ENCODE measurements at regions of chr6 and their contacts with region 1.

Region 1: DNA sequence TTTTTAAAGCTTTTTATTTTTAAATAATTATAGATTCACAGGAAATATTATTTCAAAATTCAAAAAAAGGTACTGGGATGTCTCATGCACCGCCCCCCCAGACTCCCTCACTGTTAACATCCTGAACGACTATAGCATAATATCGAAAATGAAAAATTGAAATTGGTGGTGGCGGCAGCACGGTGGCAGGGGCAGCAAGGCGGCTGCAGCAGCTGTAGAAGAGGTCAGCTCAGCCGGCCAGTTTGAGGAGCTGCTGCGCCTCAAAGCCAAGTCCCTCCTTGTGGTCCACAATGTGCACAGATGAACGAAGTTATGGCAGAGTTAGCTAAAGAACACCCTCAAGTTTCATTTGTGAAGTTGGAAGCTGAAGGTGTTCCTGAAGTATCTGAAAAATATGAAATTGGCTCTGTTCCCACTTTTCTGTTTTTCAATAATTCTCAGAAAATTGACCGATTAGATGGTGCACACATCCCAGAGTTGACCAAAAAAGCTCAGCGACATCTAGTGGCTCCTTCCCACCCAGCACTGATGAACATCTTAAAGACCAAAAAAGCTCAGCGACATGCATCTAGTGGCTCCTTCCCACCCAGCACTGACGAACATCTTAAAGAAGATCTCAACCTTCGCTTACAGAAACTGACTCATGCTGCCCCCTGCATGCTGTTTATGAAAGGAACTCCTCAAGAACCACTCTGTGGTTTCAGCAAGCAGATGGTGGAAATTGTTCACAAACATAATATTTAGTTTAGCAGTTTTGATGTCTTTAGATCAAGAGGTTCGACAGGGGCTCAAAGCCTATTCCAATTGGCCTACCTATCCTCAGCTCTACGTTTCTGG is 100.8 kb downstream of the FAM217A start:
- DNase-seq: peak; percentile 6 to 84 (median 31)
- ATAC-seq: peak; percentile 100
- H3K4me3 ChIP-seq: no peak overlapping the region
- H3K4me3 Mint-ChIP-seq: no peak overlapping the region
- H3K27ac ChIP-seq: no peak overlapping the region
- H3K27ac Mint-ChIP-seq: no peak overlapping the region
- H3K4me1 ChIP-seq: peaks cover 8% of the 10 kb centered on the region
- H3K4me1 Mint-ChIP-seq: peaks cover 17% of the 10 kb centered on the region
- H3K27me3 ChIP-seq: no peaks in the 10 kb centered on the region
- H3K27me3 Mint-ChIP-seq: no peaks in the 10 kb centered on the region
- CTCF ChIP-seq: peak; percentile 73

Region 2: DNA sequence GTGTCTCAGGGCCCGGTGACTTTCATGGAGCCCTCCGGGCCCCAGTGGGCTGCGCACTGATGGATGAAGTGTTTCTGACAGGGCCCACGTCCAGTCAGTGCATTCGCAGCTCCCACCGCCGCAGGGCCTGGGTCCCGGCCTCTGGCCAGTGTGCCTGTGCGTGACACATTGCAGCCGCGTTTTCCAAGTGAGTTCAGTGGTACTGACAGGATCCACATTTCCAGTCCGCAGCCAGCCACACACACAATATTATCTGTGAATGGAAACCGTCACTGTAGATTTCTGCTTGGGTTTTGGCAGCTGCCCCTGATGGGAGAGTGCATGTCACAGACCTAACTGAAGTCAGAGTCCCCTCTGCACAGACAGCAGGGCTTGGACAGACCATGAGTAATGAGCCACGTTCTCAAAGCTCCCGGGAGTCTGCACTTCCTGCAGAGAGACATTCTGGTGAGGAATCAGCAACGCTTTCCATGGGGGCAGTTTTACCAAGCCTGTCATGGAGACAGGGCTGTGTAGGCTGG is 1398.8 kb before region 1 on chr6:
- CTCF ChIA-PET with region 1: no interaction called
- POLR2A ChIA-PET with region 1: no interaction called
- intact Hi-C with region 1: no loop called
- DNase-seq: no peak
- ATAC-seq: no peak
- H3K4me3 ChIP-seq: no peak overlapping the region
- H3K4me3 Mint-ChIP-seq: no peak overlapping the region
- H3K27ac ChIP-seq: no peak overlapping the region
- H3K27ac Mint-ChIP-seq: no peak overlapping the region
- H3K4me1 ChIP-seq: no peaks in the 10 kb centered on the region
- H3K4me1 Mint-ChIP-seq: no peaks in the 10 kb centered on the region
- H3K27me3 ChIP-seq: peaks cover 0 to 3% of the 10 kb centered on the region in 2 experiments
- H3K27me3 Mint-ChIP-seq: peaks cover 50% of the 10 kb centered on the region
- CTCF ChIP-seq: no peak

Region 3: DNA sequence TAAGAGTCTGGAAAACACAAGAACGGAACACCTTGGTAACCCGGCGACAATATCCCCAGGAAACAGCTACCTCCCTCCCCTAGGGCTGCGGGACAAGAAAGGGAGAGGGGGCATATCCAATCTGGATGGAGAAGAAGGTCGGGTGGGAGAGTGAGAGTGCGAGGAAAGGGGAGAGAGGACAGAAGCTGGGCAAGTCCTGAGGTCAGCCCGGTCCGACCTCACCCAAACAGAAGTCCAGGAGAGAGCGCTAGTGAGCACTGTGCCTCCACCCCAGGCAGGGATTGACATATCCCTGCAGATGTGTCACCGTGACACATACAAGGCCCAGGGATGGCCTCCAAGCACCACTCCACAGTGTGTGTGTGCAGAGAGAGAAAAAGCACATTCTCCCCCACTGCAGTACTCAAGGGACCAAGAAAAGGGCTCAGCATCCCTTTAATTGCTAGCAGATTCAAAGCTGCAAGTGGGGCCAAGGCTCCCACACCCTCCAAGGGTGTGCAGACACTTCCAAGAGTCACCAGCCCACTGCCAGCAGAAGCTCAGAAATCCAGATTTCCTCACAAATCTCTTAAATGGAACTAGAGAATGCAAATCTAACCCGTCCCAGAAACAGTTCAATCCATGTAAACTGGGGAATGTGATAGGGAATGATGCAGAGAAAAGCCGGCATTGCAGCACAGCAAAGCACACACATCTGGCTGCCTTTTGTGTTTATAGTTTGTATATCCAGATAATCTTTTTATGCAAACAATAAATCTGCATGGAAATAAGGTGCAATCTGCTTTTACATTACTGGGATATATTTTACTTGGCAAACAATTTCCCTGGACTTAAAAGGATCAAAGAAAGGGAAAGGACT is 229.7 kb before region 1 on chr6:
- CTCF ChIA-PET with region 1: interaction called, 7 read pairs
- POLR2A ChIA-PET with region 1: interaction called, 3 read pairs
- intact Hi-C with region 1: loop called in 1 of 2 experiments (anchors 2 kb)
- DNase-seq: peak in 6 of 14 experiments; percentile 15 to 63 (median 27)
- ATAC-seq: peak; percentile 62
- H3K4me3 ChIP-seq: no peak overlapping the region
- H3K4me3 Mint-ChIP-seq: peak overlapping the region; percentile 38
- H3K27ac ChIP-seq: no peak overlapping the region
- H3K27ac Mint-ChIP-seq: no peak overlapping the region
- H3K4me1 ChIP-seq: peaks cover 18% of the 10 kb centered on the region
- H3K4me1 Mint-ChIP-seq: peaks cover 14% of the 10 kb centered on the region
- H3K27me3 ChIP-seq: peaks cover 21 to 38% of the 10 kb centered on the region in 2 experiments
- H3K27me3 Mint-ChIP-seq: peaks cover 43% of the 10 kb centered on the region
- CTCF ChIP-seq: peak; percentile 39

Region 4: DNA sequence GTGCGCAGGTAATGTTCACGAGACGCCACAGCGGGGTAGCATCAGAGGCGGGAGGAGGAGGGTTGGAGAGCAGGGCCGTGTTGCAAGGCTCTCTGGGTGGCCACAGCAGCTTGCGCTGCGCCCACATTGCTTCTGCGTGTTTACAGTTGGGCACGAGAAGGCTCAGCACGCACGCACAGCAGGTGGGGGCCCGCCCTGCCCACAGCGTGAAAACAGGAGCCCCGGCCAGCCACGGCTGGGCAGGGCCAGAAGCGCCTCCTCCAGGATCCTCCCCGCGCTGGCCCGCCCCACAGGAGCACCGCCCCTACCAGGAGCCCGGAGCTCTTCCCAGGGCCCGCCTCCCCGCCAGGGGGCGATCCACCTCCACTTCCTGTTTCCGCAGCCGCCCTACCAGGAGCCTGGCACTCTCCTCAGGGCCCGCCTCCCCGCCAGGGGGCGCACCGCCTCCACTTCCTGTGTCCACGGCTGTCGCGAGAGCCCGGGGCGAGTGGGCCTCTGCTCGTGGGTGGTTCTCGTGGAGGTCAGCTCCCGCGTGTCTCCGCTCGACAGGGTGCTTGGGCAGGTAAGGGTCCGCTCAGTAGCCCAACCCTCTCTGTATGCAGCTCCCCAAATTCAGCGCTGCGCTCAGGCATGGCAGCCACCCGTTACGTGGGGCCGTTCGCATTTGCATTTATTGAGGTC is 129.0 kb before region 1 on chr6 and contains the start of gene FAM50B:
- CTCF ChIA-PET with region 1: interaction called, 14 read pairs
- POLR2A ChIA-PET with region 1: interaction called, 6 read pairs
- intact Hi-C with region 1: no loop called
- DNase-seq: peak; percentile 84 to 96 (median 91)
- ATAC-seq: peak; percentile 94
- H3K4me3 ChIP-seq: peak within 1 kb of the TSS; percentile 74
- H3K4me3 Mint-ChIP-seq: peak within 1 kb of the TSS; percentile 78
- H3K27ac ChIP-seq: peak within 1 kb of the TSS in 1 of 2 donors; percentile 58
- H3K27ac Mint-ChIP-seq: peak within 1 kb of the TSS; percentile 83
- H3K4me1 ChIP-seq: peaks cover 34% of the 10 kb centered on the region
- H3K4me1 Mint-ChIP-seq: peaks cover 20% of the 10 kb centered on the region
- H3K27me3 ChIP-seq: no peaks in the 10 kb centered on the region
- H3K27me3 Mint-ChIP-seq: no peaks in the 10 kb centered on the region
- CTCF ChIP-seq: peak; percentile 89
- total RNA-seq, gene FAM50B: 2.7 to 2.8 TPM

Region 5: DNA sequence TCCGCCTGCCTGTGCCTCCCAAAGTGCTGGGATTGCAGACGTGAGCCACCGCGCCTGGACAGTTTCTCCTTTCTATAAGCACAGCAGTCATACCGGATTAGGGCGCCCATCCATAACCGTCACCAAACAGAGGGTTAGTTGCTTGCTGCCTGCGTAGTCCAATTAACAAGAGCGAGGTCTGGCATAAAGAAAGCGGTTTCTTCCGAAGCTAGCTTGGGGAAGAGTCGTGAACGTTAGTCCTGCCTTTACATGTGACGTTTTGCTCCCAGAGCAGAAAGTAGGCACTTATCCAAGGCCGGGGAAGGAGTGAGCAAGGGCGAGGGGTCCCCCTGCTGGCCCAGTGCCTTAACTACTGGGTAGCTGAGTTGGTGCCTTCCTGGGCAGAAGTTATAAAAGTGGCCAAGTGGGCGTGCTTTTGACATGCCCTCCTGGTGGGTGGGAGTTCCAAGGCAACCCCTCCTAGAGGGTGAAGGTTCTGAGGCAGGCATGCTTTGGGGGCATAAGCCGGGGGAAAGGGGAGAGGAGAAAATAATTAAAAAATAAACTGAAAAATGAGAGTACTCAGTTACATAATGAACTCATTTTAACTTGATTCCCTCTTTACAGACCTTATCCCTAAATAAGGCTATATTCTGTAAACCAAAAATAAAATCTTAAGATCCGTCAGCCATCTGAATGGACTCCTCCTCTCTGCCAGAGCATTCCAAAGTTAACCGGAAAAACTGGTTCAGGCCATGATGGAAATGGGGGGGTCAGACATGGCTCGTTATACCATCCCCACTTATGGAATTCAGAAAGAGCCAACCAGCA is 12.8 kb after region 1 on chr6:
- CTCF ChIA-PET with region 1: interaction called, 18 read pairs
- POLR2A ChIA-PET with region 1: no interaction called
- intact Hi-C with region 1: no loop called
- DNase-seq: peak; percentile 55 to 82 (median 62)
- ATAC-seq: peak; percentile 93
- H3K4me3 ChIP-seq: no peak overlapping the region
- H3K4me3 Mint-ChIP-seq: no peak overlapping the region
- H3K27ac ChIP-seq: no peak overlapping the region
- H3K27ac Mint-ChIP-seq: no peak overlapping the region
- H3K4me1 ChIP-seq: peaks cover 7% of the 10 kb centered on the region
- H3K4me1 Mint-ChIP-seq: peaks cover 24% of the 10 kb centered on the region
- H3K27me3 ChIP-seq: no peaks in the 10 kb centered on the region
- H3K27me3 Mint-ChIP-seq: no peaks in the 10 kb centered on the region
- CTCF ChIP-seq: peak; percentile 83

Region 6: DNA sequence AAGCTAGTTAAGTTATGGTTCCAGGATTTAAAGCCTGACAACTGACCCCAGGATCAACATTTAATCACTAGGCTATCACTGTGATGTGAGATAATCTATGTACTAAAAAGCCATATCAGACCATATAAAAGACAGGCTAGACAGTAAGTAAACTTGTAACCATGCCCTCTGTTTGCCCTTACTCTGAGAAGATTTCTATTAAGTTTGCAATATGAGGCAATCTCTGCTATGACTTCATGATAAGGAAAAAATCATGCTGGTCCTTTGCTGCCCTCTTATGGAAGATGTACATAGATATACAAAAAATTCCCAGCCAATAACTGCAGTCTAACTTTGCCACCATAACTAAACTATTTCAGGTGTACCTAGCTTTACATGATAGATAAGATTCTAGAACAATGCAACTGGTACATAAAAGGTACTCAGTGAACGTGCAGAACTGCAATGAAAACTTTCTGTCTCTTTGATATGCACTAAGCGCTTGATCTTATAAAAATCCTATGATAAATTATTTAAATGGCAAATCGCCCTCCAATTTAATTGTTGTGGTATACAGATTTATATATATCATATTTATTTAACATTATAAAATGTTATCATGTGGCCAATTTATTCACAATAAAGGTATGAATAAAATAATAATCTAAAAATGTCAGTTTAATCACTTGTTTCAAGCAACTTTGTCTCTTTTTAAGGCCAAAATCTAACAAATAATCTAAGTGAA is 30.4 kb after region 1 on chr6:
- CTCF ChIA-PET with region 1: interaction called, 5 read pairs
- POLR2A ChIA-PET with region 1: no interaction called
- intact Hi-C with region 1: loop called in 1 of 2 experiments (anchors 1 kb)
- DNase-seq: peak in 5 of 14 experiments; percentile 10 to 80 (median 68)
- ATAC-seq: peak; percentile 85
- H3K4me3 ChIP-seq: no peak overlapping the region
- H3K4me3 Mint-ChIP-seq: no peak overlapping the region
- H3K27ac ChIP-seq: no peak overlapping the region
- H3K27ac Mint-ChIP-seq: peak overlapping the region; percentile 10
- H3K4me1 ChIP-seq: peaks cover 15% of the 10 kb centered on the region
- H3K4me1 Mint-ChIP-seq: peaks cover 71% of the 10 kb centered on the region
- H3K27me3 ChIP-seq: no peaks in the 10 kb centered on the region
- H3K27me3 Mint-ChIP-seq: no peaks in the 10 kb centered on the region
- CTCF ChIP-seq: peak; percentile 70

Region 7: GRCh38 chr6:4059115-4059777 is 81.2 kb after region 1 on chr6:
- CTCF ChIA-PET with region 1: no interaction called
- POLR2A ChIA-PET with region 1: no interaction called
- intact Hi-C with region 1: no loop called
- DNase-seq: peak in 13 of 14 experiments; percentile 11 to 63 (median 44)
- ATAC-seq: peak; percentile 71
- H3K4me3 ChIP-seq: no peak overlapping the region
- H3K4me3 Mint-ChIP-seq: no peak overlapping the region
- H3K27ac ChIP-seq: no peak overlapping the region
- H3K27ac Mint-ChIP-seq: peak overlapping the region; percentile 72
- H3K4me1 ChIP-seq: peaks cover 5% of the 10 kb centered on the region
- H3K4me1 Mint-ChIP-seq: peaks cover 30% of the 10 kb centered on the region
- H3K27me3 ChIP-seq: no peaks in the 10 kb centered on the region
- H3K27me3 Mint-ChIP-seq: no peaks in the 10 kb centered on the region
- CTCF ChIP-seq: no peak